Heart right ventricle (tissue), 16 donors: ENCODE measurements at regions of chr16 and their contacts with region 1.

Region 1: GRCh38 chr16:68093816-68094613 is 8.8 kb downstream of the NFATC3 start:
- DNase-seq: no peak
- ATAC-seq: peak in 7 of 8 donors; percentile 55 to 82 (median 62)
- H3K4me3 ChIP-seq: no peak overlapping the region
- H3K27ac ChIP-seq: peak overlapping the region in 2 of 10 donors; percentile 22 to 54
- H3K4me1 ChIP-seq: peaks cover 0 to 77% (median 56%) of the 10 kb centered on the region in 9 donors
- H3K27me3 ChIP-seq: no peaks in the 10 kb centered on the region
- CTCF ChIP-seq: peak in 8 of 9 donors; percentile 27 to 67 (median 45)

Region 2: DNA sequence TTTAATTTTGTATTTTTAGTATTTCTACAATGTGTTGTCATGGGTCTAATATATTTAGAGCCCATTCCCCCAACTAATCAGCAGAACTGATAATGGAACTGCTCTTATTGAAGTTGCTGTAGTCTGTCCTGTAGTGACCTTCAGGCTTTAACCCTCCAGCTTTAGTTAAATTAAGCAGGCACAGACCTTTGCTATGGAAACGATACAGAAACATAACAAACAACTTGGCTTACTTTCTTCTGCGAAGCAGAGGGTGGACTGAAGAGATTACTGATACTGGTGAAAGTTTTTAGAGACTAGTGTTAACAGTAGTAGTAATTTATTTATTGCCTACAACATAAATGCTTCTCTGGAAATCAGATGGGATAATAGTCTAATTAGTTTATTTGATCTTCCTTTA is 52.6 kb after region 1 on chr16:
- intact Hi-C with region 1: loop called in 3 of 10 experiments (anchors 5 to 10 kb)
- DNase-seq: no peak
- ATAC-seq: peak; percentile 82 to 94 (median 86)
- H3K4me3 ChIP-seq: no peak overlapping the region
- H3K27ac ChIP-seq: peak overlapping the region in 7 of 10 donors; percentile 1 to 61 (median 15)
- H3K4me1 ChIP-seq: peaks cover 0 to 29% (median 23%) of the 10 kb centered on the region in 9 donors
- H3K27me3 ChIP-seq: no peaks in the 10 kb centered on the region
- CTCF ChIP-seq: no peak

Region 3: DNA sequence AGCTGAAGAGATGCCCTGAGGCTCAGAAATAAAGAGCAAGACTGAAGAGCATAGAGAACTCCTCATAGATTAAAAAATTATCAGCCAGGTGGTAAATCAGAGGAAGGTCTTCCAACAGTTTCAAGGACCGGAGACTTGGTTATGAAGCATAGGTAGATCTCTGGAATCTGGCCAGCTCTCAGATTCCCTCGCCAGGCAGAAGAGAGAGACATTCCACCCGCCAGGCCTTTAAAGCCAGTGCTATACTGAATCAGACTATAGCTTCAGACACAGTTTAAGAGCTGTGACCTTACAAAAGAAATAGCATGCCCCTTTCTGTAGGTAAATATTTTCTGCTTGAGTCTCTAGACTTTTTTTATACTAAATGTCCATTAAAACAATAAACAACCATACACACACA is 61.4 kb after region 1 on chr16:
- intact Hi-C with region 1: loop called in 1 of 10 experiments (anchors 10 kb)
- DNase-seq: no peak
- ATAC-seq: no peak
- H3K4me3 ChIP-seq: no peak overlapping the region
- H3K27ac ChIP-seq: no peak overlapping the region
- H3K4me1 ChIP-seq: no peaks in the 10 kb centered on the region
- H3K27me3 ChIP-seq: no peaks in the 10 kb centered on the region
- CTCF ChIP-seq: no peak

Region 4: DNA sequence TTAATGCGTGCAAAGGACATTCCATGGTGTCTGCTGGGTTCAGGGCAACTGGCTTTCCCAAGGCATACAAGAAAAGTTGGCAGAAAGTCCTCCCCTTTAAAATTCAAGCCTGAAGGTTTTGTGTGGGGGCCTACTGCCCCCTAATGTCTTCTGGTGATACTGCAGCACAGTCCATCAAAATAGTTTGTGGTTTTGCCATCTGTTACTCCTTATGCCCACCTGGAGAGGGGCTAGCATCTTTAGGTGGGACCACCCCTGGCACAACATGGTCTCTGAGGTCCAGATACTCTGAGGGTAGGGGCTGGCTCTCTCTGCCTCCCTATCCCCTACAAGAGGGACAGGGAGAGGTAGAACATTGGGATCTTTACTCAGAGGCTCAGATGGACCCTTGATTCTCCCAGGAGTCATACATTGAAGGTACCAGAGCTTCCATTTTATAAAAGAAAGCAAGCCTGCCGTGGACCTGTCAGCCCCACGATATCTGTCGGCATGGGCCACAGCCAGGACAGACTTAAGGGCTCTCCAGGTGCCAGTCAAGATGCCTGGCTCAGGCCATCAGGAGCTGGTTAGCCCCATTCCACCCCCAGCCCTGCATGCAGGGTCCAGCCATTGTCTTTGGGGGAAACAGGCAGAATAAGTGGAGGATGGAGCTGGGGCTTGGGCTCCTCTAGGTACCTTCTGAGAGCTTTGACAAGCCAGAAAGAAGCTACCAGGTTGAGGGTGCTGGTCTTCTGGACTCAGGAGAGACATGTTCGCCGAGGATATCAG is 135.6 kb after region 1 on chr16:
- intact Hi-C with region 1: loop called (anchors 2 to 10 kb)
- DNase-seq: no peak
- ATAC-seq: peak; percentile 11 to 57 (median 38)
- H3K4me3 ChIP-seq: no peak overlapping the region
- H3K27ac ChIP-seq: peak overlapping the region in 1 of 10 donors; percentile 43
- H3K4me1 ChIP-seq: peaks cover 3 to 33% (median 23%) of the 10 kb centered on the region in 9 donors
- H3K27me3 ChIP-seq: no peaks in the 10 kb centered on the region
- CTCF ChIP-seq: peak; percentile 85 to 94 (median 91)